ENCODE measurements at regions of chr7 and their contacts with region 1.

Region 1: DNA sequence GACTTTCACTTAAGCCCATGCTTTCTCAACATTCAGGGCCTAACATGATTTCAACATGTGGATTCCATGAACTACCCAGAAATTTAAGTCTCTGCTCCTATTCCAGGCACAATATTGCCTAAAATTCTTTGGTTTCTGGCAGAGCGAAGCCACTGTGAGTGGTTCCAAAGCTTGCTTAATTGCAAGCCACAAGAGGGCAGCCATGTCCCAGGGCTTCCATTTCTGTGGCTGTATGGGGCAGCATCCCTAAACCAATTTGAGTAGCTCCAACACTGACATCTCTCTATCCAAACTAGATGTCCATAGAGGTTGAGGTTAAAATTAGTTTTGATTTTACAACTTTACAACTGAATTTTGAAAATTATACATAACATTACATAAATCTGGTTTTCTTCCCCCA is 56.3 kb upstream of the MDFIC start:
- DNase-seq: peak; percentile 69
- ATAC-seq: peak; percentile 56
- H3K4me3 ChIP-seq: no peak overlapping the region
- H3K4me3 Mint-ChIP-seq: no peak overlapping the region
- H3K27ac ChIP-seq: no peak overlapping the region
- H3K27ac Mint-ChIP-seq: no peak overlapping the region
- H3K4me1 ChIP-seq: no peaks in the 10 kb centered on the region
- H3K4me1 Mint-ChIP-seq: no peaks in the 10 kb centered on the region
- H3K27me3 ChIP-seq: no peaks in the 10 kb centered on the region
- H3K27me3 Mint-ChIP-seq: no peaks in the 10 kb centered on the region
- CTCF ChIP-seq: peak; percentile 85

Region 2: GRCh38 chr7:114026486-114027089 is 839.0 kb before region 1 on chr7:
- CTCF ChIA-PET with region 1: interaction called, 5 read pairs
- POLR2A ChIA-PET with region 1: no interaction called
- intact Hi-C with region 1: loop called (anchors 2 kb)
- DNase-seq: peak; percentile 75
- ATAC-seq: no peak
- H3K4me3 ChIP-seq: no peak overlapping the region
- H3K4me3 Mint-ChIP-seq: no peak overlapping the region
- H3K27ac ChIP-seq: no peak overlapping the region
- H3K27ac Mint-ChIP-seq: no peak overlapping the region
- H3K4me1 ChIP-seq: no peaks in the 10 kb centered on the region
- H3K4me1 Mint-ChIP-seq: no peaks in the 10 kb centered on the region
- H3K27me3 ChIP-seq: no peaks in the 10 kb centered on the region
- H3K27me3 Mint-ChIP-seq: peaks cover 10% of the 10 kb centered on the region
- CTCF ChIP-seq: peak; percentile 95

Region 3: GRCh38 chr7:114703677-114704076 is 161.9 kb before region 1 on chr7:
- CTCF ChIA-PET with region 1: no interaction called
- POLR2A ChIA-PET with region 1: no interaction called
- intact Hi-C with region 1: no loop called
- DNase-seq: no peak
- ATAC-seq: no peak
- H3K4me3 ChIP-seq: no peak overlapping the region
- H3K4me3 Mint-ChIP-seq: no peak overlapping the region
- H3K27ac ChIP-seq: no peak overlapping the region
- H3K27ac Mint-ChIP-seq: no peak overlapping the region
- H3K4me1 ChIP-seq: no peaks in the 10 kb centered on the region
- H3K4me1 Mint-ChIP-seq: no peaks in the 10 kb centered on the region
- H3K27me3 ChIP-seq: no peaks in the 10 kb centered on the region
- H3K27me3 Mint-ChIP-seq: no peaks in the 10 kb centered on the region
- CTCF ChIP-seq: no peak

Region 4: DNA sequence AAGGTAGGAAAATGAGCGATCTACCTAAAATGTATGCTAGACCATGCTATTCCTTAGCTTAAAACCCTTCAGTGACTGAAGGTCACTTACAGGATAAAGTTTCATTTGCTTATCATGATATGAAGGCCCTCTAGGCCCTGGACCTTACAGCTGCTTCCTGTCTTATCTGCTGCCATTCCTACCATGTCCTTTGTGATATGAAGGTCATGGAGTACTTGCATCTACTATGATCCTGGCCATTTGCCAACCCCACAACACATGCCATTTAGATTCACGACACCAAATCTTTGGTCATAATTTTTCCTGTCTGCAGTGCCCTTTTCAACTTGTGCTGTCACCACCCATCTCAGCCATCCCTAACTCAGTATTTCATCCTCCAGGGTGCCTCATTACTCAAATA is 125.5 kb before region 1 on chr7:
- CTCF ChIA-PET with region 1: no interaction called
- POLR2A ChIA-PET with region 1: no interaction called
- intact Hi-C with region 1: no loop called
- DNase-seq: no peak
- ATAC-seq: no peak
- H3K4me3 ChIP-seq: no peak overlapping the region
- H3K4me3 Mint-ChIP-seq: no peak overlapping the region
- H3K27ac ChIP-seq: no peak overlapping the region
- H3K27ac Mint-ChIP-seq: no peak overlapping the region
- H3K4me1 ChIP-seq: no peaks in the 10 kb centered on the region
- H3K4me1 Mint-ChIP-seq: no peaks in the 10 kb centered on the region
- H3K27me3 ChIP-seq: no peaks in the 10 kb centered on the region
- H3K27me3 Mint-ChIP-seq: no peaks in the 10 kb centered on the region
- CTCF ChIP-seq: no peak

Region 5: DNA sequence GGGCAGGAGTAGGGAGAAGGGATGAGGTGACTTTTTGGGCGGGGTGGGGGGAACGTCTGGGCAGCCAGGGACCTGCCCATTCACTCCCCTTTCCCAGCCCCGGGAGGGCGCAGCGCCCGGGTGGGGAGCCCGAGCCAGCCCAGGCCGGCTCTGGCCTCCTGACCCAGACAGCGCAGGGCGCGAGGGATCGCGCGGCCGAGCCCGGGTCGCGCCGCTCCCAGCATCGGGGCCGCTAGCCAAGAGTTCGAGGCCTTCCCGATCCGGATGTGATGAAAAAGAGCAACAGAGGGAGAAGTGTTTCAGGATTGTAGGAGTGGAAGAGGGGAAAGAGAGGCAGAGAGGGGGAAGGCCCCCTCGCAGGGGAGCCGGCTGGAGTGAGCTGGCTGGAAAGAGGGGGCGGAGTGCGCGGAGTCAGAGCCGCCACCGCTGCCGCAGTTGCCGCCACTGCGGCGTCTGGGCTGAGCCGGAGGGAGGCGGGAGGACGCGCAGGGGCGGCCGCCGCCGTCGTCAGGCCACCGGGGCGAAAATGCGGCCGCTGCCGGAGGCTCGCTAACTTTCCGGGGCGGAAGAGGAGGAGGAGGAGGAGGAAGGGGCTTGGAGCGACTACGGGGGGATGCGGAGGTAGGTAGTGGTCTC is 56.6 kb after region 1 on chr7 and contains the start of gene MDFIC:
- CTCF ChIA-PET with region 1: interaction called, 26 read pairs
- POLR2A ChIA-PET with region 1: no interaction called
- intact Hi-C with region 1: no loop called
- DNase-seq: no peak
- ATAC-seq: peak; percentile 62
- H3K4me3 ChIP-seq: peak within 1 kb of the TSS; percentile 57 to 90 (median 88)
- H3K4me3 Mint-ChIP-seq: peak within 1 kb of the TSS; percentile 99
- H3K27ac ChIP-seq: peak within 1 kb of the TSS; percentile 82 to 91
- H3K27ac Mint-ChIP-seq: peak within 1 kb of the TSS; percentile 98
- H3K4me1 ChIP-seq: peaks cover 33 to 36% of the 10 kb centered on the region in 2 donors
- H3K4me1 Mint-ChIP-seq: peaks cover 70% of the 10 kb centered on the region
- H3K27me3 ChIP-seq: no peaks in the 10 kb centered on the region
- H3K27me3 Mint-ChIP-seq: no peaks in the 10 kb centered on the region
- CTCF ChIP-seq: no peak
- total RNA-seq, gene MDFIC: 56.0 and 66.1 TPM in 2 replicates

Region 6: GRCh38 chr7:114956702-114957101 is 91.1 kb after region 1 on chr7:
- CTCF ChIA-PET with region 1: interaction called, 51 read pairs
- POLR2A ChIA-PET with region 1: no interaction called
- intact Hi-C with region 1: loop called (anchors 1 kb)
- DNase-seq: no peak
- ATAC-seq: no peak
- H3K4me3 ChIP-seq: no peak overlapping the region
- H3K4me3 Mint-ChIP-seq: no peak overlapping the region
- H3K27ac ChIP-seq: no peak overlapping the region
- H3K27ac Mint-ChIP-seq: no peak overlapping the region
- H3K4me1 ChIP-seq: peaks cover 0 to 6% of the 10 kb centered on the region in 2 donors
- H3K4me1 Mint-ChIP-seq: peaks cover 51% of the 10 kb centered on the region
- H3K27me3 ChIP-seq: no peaks in the 10 kb centered on the region
- H3K27me3 Mint-ChIP-seq: no peaks in the 10 kb centered on the region
- CTCF ChIP-seq: no peak

Region 7: DNA sequence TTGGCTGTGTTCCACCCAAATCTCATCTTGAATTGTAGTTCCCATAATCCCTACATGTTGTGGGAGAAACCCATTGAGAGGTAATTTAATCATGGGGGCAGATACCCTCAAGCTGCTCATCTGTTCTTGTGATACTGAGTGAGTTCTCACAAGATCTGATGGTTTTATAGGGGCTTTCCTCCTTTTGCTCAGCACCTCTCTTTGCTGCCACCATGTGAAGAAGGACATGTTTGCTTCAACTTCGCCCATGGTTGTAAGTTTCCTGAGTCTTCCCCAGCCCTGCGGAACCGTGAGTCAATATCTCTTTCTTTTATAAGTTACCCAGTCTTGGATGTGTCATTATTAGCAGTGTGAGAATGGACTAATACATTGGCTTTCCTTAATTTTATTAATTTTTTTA is 584.1 kb after region 1 on chr7:
- CTCF ChIA-PET with region 1: interaction called, 10 read pairs
- POLR2A ChIA-PET with region 1: no interaction called
- intact Hi-C with region 1: no loop called
- DNase-seq: peak; percentile 47
- ATAC-seq: no peak
- H3K4me3 ChIP-seq: no peak overlapping the region
- H3K4me3 Mint-ChIP-seq: no peak overlapping the region
- H3K27ac ChIP-seq: no peak overlapping the region
- H3K27ac Mint-ChIP-seq: no peak overlapping the region
- H3K4me1 ChIP-seq: no peaks in the 10 kb centered on the region
- H3K4me1 Mint-ChIP-seq: no peaks in the 10 kb centered on the region
- H3K27me3 ChIP-seq: peaks cover 0 to 6% (median 0%) of the 10 kb centered on the region in 4 experiments
- H3K27me3 Mint-ChIP-seq: peaks cover 22% of the 10 kb centered on the region
- CTCF ChIP-seq: no peak

Region 8: DNA sequence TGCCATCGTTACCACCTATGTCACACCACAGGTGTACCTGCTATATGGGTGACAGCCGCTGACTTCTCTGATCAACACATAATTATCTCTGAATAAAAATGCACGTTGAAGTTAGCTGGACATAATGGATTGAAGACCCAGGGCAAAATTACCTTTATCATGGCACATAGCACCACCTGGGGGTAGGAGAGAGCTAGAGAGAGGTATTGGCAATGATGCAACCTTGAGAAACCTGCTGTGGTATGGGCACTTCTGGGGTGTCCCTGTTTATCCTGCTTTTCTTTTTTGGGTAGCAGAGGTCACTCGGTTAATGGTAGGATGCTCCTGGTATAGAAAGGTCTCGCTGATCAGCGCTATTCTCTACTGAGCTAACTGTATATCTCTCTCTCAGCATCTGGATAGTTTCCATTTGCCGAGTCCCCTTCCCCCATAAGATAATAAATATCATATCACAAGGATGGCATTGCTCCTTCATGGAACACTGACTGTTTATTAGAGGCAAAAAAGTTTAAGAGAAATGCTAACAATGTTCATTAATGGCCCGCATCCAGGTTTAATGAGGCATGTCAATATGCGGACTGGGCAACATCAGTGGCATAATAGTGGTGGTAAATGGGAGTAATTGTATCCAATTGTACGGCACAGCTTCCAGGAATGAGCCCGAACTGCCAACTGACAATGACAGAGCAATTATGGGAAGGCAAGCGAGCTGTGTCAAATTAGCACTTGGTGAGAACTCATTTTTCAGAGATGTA is 841.9 kb after region 1 on chr7:
- CTCF ChIA-PET with region 1: interaction called, 12 read pairs
- POLR2A ChIA-PET with region 1: no interaction called
- intact Hi-C with region 1: no loop called
- DNase-seq: peak; percentile 6
- ATAC-seq: no peak
- H3K4me3 ChIP-seq: no peak overlapping the region
- H3K4me3 Mint-ChIP-seq: no peak overlapping the region
- H3K27ac ChIP-seq: no peak overlapping the region
- H3K27ac Mint-ChIP-seq: no peak overlapping the region
- H3K4me1 ChIP-seq: no peaks in the 10 kb centered on the region
- H3K4me1 Mint-ChIP-seq: no peaks in the 10 kb centered on the region
- H3K27me3 ChIP-seq: no peaks in the 10 kb centered on the region
- H3K27me3 Mint-ChIP-seq: no peaks in the 10 kb centered on the region
- CTCF ChIP-seq: no peak

Region 9: DNA sequence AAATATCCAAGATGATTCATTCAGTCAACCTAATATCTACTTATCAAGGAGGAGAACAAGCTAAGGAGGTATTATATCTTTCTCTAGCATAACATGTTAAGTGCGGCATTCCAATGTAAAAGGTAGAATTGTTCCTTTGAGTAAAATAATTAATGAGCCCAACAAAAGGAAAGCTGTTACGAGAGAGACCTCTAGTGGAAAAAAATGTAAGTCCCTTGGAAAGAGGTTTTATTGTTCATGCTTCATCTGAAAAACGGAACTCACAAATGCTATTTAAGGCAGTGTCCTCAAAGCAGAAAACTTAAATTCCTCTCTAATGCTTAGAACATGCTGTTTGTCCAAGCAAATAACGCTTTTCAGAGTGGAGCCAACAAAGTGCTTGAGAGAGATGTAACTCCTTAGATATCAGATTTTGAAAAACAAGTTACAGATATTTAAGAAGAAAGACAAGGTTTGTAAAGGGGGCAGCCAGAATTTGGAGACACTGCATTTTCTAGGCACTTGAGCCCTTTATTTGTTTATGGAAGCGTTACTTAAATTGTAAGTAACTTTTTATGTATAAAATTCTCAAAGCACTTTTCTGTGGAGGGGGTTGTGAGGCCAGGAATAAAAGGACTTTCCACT is 1045.1 kb after region 1 on chr7:
- CTCF ChIA-PET with region 1: interaction called, 3 read pairs
- POLR2A ChIA-PET with region 1: no interaction called
- intact Hi-C with region 1: loop called (anchors 2 kb)
- DNase-seq: peak; percentile 36
- ATAC-seq: no peak
- H3K4me3 ChIP-seq: no peak overlapping the region
- H3K4me3 Mint-ChIP-seq: no peak overlapping the region
- H3K27ac ChIP-seq: no peak overlapping the region
- H3K27ac Mint-ChIP-seq: no peak overlapping the region
- H3K4me1 ChIP-seq: peaks cover 0 to 3% of the 10 kb centered on the region in 2 donors
- H3K4me1 Mint-ChIP-seq: no peaks in the 10 kb centered on the region
- H3K27me3 ChIP-seq: no peaks in the 10 kb centered on the region
- H3K27me3 Mint-ChIP-seq: peaks cover 11% of the 10 kb centered on the region
- CTCF ChIP-seq: peak; percentile 60

Measured in B cell (primary cell).